Aorta (tissue), 5 donors: ENCODE measurements at regions of chr7 and their contacts with region 1.

Region 1: DNA sequence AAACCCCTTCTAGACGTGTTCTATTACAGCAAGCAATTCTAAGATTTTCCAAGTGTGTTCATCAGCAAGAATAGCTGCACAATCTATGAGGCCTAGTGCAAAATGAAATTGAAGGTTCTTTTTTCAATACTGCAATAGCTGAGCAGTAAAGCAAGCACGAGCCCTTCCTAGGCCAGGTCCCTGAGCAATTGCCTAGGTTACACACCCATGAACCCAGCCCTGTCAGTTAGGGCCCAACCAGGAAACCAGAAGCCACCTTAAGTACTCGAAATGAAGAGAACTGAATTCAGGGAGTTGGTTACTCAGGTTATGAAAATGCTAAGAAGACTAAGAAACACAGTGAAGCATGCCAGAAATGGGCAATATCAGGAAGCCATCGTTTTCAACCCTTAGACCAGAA is 52.0 kb upstream of the VWC2 start:
- DNase-seq: no peak
- ATAC-seq: no peak
- H3K4me3 ChIP-seq: no peak overlapping the region
- H3K27ac ChIP-seq: no peak overlapping the region
- H3K4me1 ChIP-seq: no peaks in the 10 kb centered on the region
- H3K27me3 ChIP-seq: no peaks in the 10 kb centered on the region

Region 2: GRCh38 chr7:49974035-49974434 is 252.6 kb after region 1 on chr7:
- intact Hi-C with region 1: loop called in 1 of 2 experiments (anchors 5 kb)
- DNase-seq: no peak
- ATAC-seq: no peak
- H3K4me3 ChIP-seq: no peak overlapping the region
- H3K27ac ChIP-seq: no peak overlapping the region
- H3K4me1 ChIP-seq: no peaks in the 10 kb centered on the region
- H3K27me3 ChIP-seq: no peaks in the 10 kb centered on the region